IMR-90 (cell line): ENCODE measurements at regions of chr12 and their contacts with region 1.

Region 1: DNA sequence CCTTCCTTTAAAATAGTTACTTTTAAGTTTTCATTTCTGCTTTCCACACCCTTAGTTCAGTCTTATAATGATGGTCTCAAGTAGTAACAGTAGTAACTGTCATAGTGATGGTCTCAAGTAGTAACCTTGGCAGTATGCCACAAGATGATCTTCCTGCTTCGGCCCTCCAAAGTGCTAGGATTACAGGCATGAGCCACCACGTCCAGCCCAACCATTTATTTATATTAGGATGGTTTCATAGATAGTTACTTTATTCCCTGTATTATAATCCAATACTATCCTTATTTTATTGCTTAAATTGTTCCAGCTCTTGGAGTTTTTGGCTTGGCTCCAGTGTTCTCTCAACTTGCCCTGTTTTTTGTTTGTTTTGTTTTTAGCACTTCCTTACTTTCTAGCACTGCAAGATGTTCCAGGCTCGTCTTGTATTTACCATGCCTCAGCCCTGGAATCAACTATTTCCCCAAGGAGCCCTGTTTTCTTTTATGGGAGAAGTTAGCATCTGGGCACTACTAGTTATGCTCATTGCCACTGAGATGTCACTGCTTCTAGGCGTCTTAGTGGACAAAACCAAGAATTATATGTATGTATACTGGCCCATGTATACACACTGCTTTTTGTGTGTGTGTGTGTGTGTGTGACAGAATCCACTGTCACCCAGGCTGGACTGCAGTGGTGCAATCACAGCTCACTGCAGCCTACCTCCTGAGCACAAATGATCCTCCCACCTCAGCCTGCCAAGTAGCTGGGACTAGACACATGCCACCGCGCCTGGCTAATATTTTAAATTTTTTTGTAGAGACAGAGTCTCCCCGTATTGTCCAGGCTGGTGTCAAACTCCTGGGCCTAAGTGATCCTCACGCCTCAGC is 25.4 kb downstream of the LIMA1 start:
- DNase-seq: peak; percentile 64
- ATAC-seq: peak; percentile 44; the same call in 1 of the 2 replicates
- H3K4me3 ChIP-seq: no peak overlapping the region
- H3K27ac ChIP-seq: no peak overlapping the region
- H3K4me1 ChIP-seq: peaks cover 15% of the 10 kb centered on the region
- H3K27me3 ChIP-seq: no peaks in the 10 kb centered on the region
- CTCF ChIP-seq: no peak
- POLR2A ChIP-seq: no peak
- RAD21 ChIP-seq: no peak

Region 2: GRCh38 chr12:50246873-50247612 is 10.9 kb before region 1 on chr12:
- CTCF ChIA-PET with region 1: interaction called, 3 read pairs
- POLR2A ChIA-PET with region 1: interaction called, 11 read pairs
- dilution Hi-C with region 1: no loop called
- in situ Hi-C with region 1: no loop called
- intact Hi-C with region 1: no loop called
- DNase-seq: peak; percentile 99
- ATAC-seq: peak; percentile 74
- H3K4me3 ChIP-seq: no peak overlapping the region
- H3K27ac ChIP-seq: peak overlapping the region; percentile 83
- H3K4me1 ChIP-seq: peaks cover 21% of the 10 kb centered on the region
- H3K27me3 ChIP-seq: no peaks in the 10 kb centered on the region
- CTCF ChIP-seq: no peak
- POLR2A ChIP-seq: no peak
- RAD21 ChIP-seq: no peak

Region 3: DNA sequence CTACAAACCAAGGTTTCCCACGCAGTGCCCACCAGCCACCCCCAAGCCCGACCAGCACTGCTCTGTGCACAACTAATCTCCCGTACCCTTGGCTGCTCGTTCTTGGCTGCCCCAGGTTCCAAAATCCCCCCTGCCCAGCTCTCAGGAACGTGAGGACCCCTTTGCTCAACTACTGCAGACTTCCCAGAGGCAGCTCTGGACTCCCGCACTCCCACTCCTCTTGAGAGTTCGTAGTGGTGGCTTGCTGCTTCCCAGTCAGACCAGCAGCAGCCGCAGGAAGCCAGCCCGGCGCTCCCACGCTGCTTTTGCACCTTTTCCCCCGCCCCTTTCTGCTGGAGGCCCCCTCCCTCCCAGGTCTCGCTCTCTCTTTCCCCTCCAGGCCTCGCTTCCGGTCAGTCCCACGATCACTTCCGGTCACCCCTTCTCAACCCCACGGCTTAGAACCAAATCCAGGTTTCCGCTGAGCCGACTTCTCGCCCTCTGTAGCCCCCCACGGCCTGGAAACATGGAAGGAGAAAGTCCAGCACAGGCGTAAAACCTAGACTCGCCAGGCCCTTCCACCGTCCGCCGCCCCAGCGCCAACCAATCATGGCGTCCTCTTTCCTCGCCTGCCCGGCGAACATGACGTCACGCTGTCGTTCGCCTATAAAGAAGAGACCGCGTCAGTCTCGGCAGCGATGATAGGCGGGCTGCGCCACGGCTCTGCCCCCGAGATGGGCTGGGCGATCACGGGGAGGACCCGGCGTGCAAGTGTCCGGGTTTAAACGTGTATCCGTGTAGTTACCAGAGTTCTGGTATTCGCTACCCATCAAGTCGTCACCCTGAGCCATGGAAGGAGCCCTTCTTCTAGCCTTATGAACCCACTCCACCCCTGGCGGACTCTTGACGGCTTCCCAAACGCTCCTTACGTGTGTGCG is 914.9 kb after region 1 on chr12 and contains the start of gene TFCP2:
- CTCF ChIA-PET with region 1: no interaction called
- POLR2A ChIA-PET with region 1: no interaction called
- dilution Hi-C with region 1: no loop called
- in situ Hi-C with region 1: no loop called
- intact Hi-C with region 1: no loop called
- DNase-seq: peak; percentile 97
- ATAC-seq: peak; percentile 96
- H3K4me3 ChIP-seq: peak within 1 kb of the TSS; percentile 57
- H3K27ac ChIP-seq: peak within 1 kb of the TSS; percentile 95
- H3K4me1 ChIP-seq: no peaks in the 10 kb centered on the region
- H3K27me3 ChIP-seq: no peaks in the 10 kb centered on the region
- CTCF ChIP-seq: no peak
- POLR2A ChIP-seq: peak; percentile 76
- RAD21 ChIP-seq: peak; percentile 21; the same call in 1 of the 2 replicates
- total RNA-seq, gene TFCP2: 10.0 and 13.3 TPM in 2 replicates